ENCODE measurements at regions of chr12 and their contacts with region 1.

Region 1: GRCh38 chr12:15584366-15585041 is 204.7 kb downstream of the EPS8 start:
- DNase-seq: no peak
- ATAC-seq: peak in 1 of 2 donors; percentile 49

Region 2: DNA sequence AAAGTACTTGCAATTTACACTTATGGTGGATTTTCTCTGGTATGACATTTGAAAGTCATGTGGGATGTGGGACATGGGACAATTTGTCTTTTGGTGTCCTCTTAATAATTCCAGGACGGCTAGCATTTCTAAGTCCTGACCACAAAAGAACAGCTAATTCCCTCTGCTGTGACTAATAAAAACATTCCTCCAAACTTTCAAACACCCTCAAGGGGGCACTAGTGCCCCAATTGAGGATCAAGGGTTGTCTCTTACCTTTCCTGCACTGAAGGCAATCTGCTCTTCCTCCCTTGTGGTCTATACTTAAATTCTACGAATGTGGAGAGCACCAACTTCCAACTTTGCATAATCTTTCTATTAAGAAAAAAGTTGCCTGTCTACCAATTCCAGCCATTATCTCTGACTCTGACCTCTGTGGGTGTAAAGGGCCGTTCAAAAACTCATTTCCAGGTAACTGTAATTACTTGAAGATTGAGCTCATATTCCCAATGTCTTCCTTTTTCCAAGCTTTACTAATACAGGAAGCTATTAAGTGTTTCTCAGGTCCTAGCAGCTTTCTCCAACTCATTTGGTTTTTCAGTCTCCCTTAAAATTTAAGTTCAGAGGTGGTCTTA is 52.0 kb before region 1 on chr12:
- intact Hi-C with region 1: loop called in 1 of 2 experiments (anchors 5 kb)
- DNase-seq: no peak
- ATAC-seq: peak; percentile 74 to 79

Region 3: GRCh38 chr12:15796493-15797141 is 212.1 kb after region 1 on chr12:
- intact Hi-C with region 1: no loop called
- DNase-seq: no peak
- ATAC-seq: no peak

Region 4: GRCh38 chr12:15856097-15856982 is 271.8 kb after region 1 on chr12:
- intact Hi-C with region 1: no loop called
- DNase-seq: no peak
- ATAC-seq: peak; percentile 70 to 75